ENCODE measurements at regions of chr16 and their contacts with region 1.

Region 1: GRCh38 chr16:69105489-69106361 is at the start of gene HAS3:
- DNase-seq: no peak
- total RNA-seq, gene HAS3: 0.38 TPM

Region 2: DNA sequence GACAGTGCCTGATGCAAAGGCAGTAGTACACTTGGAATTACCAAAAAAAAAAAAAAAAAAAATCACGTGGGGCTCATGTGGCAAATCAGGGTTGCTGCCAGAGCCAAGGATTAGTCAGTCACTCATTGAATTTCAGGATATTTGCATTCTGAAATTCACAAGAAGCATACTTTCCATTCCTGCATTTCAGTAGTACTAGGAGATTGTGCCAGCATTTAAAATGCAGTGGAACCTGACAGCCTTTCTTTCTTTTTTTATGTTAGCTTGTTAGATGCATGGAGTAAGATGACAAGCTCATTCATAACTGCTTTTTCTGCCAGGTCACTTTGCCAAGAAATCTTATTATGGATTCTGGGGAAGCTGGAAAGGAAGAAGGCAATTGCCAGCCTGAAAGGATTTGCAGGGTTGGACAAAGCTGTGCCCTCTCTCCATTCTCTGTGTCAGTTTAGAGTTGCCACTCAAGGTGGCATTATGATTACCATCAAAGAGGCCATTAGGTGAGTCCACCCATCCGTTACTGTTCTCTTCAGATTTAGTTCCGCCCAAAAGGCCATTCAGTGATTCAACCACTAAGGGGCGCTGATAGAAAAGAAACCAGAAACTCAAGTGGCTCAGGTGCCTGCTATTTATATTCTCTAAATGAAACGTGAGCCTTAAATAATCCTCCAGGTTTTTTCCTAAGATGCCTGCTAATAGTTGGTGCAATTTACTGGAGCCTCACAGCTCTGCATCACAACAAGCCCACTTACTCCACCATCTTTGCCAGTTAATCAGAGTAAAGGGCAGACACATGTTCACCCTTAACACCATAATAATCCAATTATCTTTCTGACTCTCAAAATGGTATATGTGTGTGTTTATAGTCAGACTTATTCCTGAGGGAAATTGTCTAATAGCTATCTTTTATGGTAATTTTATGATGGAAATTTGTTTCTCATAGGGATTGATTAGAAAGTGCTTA is 203.4 kb before region 1 on chr16:
- intact Hi-C with region 1: loop called (anchors 5 kb)
- DNase-seq: no peak

Region 3: GRCh38 chr16:68995011-68995504 is 110.7 kb before region 1 on chr16:
- intact Hi-C with region 1: loop called (anchors 10 kb)
- DNase-seq: no peak